ENCODE measurements at regions of chr16 and their contacts with region 1.

Region 1: DNA sequence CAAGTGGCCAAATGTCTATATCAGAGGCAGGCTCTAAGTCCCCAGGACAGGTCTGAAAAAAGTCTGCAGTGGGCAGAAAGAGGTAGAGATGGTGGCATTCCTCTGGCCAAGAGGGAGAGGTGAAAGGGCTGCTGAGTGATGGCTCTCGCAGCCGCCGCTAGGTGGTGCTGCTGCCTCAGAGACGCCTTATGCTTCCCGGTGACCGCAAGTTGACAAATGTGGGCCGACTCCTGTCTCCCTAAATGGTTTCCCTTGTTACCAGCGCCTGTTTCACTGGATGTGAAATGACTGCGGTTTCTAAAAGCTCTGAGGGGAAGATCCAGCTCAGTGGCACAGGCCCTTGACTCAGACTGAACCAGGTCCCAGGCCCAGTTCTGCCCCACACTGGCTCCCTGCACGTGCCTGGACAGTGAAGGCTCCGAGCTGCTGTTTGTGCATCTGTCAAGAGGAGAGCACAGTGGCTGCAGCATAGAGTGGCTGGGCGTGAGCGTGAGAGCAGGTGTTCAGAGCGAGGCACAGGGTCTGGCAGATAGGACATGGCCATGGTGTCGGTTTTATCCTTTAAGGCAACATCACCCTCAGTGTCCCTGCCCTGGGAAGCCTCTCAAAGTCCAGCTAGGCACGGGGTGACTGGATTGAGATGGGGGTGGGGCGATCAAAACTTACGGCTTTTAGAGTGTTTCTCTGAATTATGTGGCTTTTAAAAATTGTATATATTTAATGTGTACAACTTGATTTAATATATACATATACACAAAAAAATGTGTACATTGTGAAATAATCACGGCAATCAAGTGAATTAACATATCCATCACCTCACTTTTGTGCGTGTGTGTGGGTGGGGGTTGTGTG is 19.9 kb downstream of the CLEC16A start:
- DNase-seq: peak; percentile 71 to 82 (median 77)
- H3K4me3 ChIP-seq: peak overlapping the region in 1 of 2 donors; percentile 39
- H3K4me3 Mint-ChIP-seq: peak overlapping the region in 7 of 8 donors; percentile 68 to 83 (median 75)
- H3K27ac ChIP-seq: peak overlapping the region; percentile 63
- H3K27ac Mint-ChIP-seq: peak overlapping the region; percentile 88 to 95 (median 92)
- H3K4me1 ChIP-seq: peaks cover 20% of the 10 kb centered on the region
- H3K4me1 Mint-ChIP-seq: peaks cover 21 to 39% (median 26%) of the 10 kb centered on the region in 4 donors
- H3K27me3 ChIP-seq: no peaks in the 10 kb centered on the region
- H3K27me3 Mint-ChIP-seq: no peaks in the 10 kb centered on the region

Region 2: DNA sequence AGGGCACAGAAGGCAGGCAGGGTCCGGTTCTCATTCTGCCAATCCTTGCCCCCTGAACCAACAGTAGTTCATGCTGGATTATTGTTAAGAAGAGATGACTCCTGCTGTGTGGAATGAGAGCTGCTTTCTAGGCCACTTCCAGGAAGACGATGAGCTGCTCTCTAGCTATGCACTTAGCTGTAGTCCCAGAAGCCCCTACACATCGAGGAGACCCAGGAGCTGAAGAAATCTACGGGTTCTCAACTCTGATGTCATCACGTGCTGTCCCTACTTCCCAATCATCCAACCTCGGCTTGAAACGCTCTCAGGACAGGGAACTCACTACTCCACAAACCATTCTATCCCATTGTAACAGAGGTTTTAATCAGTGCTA is 354.9 kb before region 1 on chr16:
- CTCF ChIA-PET with region 1: no interaction called
- POLR2A ChIA-PET with region 1: no interaction called
- intact Hi-C with region 1: no loop called
- DNase-seq: no peak
- H3K4me3 ChIP-seq: no peak overlapping the region
- H3K4me3 Mint-ChIP-seq: no peak overlapping the region
- H3K27ac ChIP-seq: no peak overlapping the region
- H3K27ac Mint-ChIP-seq: no peak overlapping the region
- H3K4me1 ChIP-seq: no peaks in the 10 kb centered on the region
- H3K4me1 Mint-ChIP-seq: no peaks in the 10 kb centered on the region
- H3K27me3 ChIP-seq: no peaks in the 10 kb centered on the region
- H3K27me3 Mint-ChIP-seq: peaks cover 4 to 9% of the 10 kb centered on the region in 2 donors

Region 3: GRCh38 chr16:10981697-10982216 is 17.5 kb after region 1 on chr16:
- CTCF ChIA-PET with region 1: interaction called, 15 read pairs
- POLR2A ChIA-PET with region 1: no interaction called
- intact Hi-C with region 1: no loop called
- DNase-seq: no peak
- H3K4me3 ChIP-seq: no peak overlapping the region
- H3K4me3 Mint-ChIP-seq: no peak overlapping the region
- H3K27ac ChIP-seq: no peak overlapping the region
- H3K27ac Mint-ChIP-seq: peak overlapping the region in 1 of 7 donors; percentile 74
- H3K4me1 ChIP-seq: peaks cover 15% of the 10 kb centered on the region
- H3K4me1 Mint-ChIP-seq: peaks cover 20 to 29% (median 27%) of the 10 kb centered on the region in 4 donors
- H3K27me3 ChIP-seq: no peaks in the 10 kb centered on the region
- H3K27me3 Mint-ChIP-seq: no peaks in the 10 kb centered on the region

Region 4: DNA sequence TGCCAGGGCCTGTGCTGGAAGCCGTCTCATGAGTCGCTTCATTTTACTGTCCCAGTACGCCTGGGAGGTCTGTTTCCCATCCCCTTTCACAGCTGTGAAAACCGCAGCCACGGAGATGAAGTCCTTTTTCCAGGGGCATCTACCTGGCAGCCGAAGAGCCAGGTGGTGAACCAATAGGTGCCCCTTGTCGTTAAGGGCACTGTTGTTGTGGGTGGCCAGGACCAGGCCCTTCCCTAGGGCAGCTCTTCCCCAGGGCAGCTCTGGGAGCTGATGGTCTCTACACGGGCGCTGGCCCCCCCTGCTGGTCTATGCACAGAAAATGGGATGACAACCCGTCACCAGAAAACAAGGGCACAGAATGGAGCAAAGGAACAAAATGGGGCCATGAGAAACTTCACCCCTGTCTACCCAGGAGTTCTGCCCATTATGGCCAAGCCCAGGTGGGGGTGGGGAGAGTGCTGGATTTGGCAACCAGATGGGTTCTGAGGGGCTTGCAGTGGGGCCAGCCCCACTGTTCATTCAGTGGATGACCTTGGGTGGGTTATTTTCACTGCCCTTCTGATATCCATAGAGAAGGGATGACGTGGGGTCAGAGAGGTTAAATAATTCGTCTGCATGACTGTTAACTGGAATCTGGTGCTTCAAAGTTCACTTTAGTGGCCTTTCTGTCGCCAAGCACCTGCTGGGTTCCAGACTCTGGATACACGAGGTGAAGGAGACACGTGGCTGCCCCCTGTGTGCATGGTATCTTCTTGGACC is 392.5 kb after region 1 on chr16:
- CTCF ChIA-PET with region 1: interaction called, 70 read pairs
- POLR2A ChIA-PET with region 1: interaction called, 12 read pairs
- intact Hi-C with region 1: loop called (anchors 1 kb)
- DNase-seq: peak in 4 of 5 donors; percentile 40 to 48 (median 44)
- H3K4me3 ChIP-seq: no peak overlapping the region
- H3K4me3 Mint-ChIP-seq: no peak overlapping the region
- H3K27ac ChIP-seq: no peak overlapping the region
- H3K27ac Mint-ChIP-seq: peak overlapping the region in 4 of 7 donors; percentile 11 to 56 (median 38)
- H3K4me1 ChIP-seq: peaks cover 47% of the 10 kb centered on the region
- H3K4me1 Mint-ChIP-seq: peaks cover 37 to 74% (median 50%) of the 10 kb centered on the region in 4 donors
- H3K27me3 ChIP-seq: no peaks in the 10 kb centered on the region
- H3K27me3 Mint-ChIP-seq: peaks cover 4 to 16% of the 10 kb centered on the region in 2 donors

Region 5: DNA sequence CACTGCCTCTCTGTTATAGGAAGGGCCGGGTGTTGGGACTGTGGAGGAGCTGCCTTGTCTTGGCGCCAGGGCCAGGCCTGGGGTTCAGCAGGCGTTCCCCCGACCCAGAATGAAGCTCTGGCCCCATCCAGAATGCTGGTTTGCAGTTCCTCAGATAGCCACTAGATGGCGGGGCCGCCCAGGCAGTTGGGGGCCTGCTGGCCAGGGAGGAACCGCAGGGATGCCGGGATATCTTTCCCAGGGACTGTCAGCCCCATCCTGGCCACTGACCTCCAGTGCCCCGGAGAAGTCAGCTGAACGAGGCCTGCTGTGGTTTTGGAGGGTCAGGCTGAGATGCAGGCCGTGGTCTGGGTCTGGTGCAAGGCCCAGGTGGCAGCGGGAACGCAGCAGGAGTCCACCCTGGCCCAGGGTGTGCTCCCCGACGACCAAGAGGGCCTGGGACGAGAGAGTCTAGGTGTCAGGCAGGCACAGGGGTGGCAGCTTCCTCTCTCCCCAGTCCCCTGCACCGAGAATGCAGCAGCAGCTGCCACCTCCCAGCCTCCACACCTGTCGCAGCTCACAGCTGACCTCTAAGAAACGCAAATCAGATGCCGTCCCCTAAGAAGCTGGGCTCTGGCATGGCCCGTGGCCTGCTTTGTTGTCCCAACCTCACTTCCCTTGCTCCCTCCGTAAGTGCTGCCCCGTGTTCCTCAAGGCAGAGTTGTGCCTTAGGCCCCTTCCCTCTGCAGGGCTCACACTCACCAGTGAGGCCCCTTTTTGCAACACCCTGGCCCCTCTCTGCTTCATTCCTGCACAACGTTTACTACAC is 432.2 kb after region 1 on chr16:
- CTCF ChIA-PET with region 1: interaction called, 11 read pairs
- POLR2A ChIA-PET with region 1: no interaction called
- intact Hi-C with region 1: no loop called
- DNase-seq: peak; percentile 51 to 65 (median 54)
- H3K4me3 ChIP-seq: no peak overlapping the region
- H3K4me3 Mint-ChIP-seq: no peak overlapping the region
- H3K27ac ChIP-seq: no peak overlapping the region
- H3K27ac Mint-ChIP-seq: peak overlapping the region in 1 of 7 donors; percentile 24
- H3K4me1 ChIP-seq: peaks cover 5% of the 10 kb centered on the region
- H3K4me1 Mint-ChIP-seq: peaks cover 0 to 5% (median 1%) of the 10 kb centered on the region in 4 donors
- H3K27me3 ChIP-seq: no peaks in the 10 kb centered on the region
- H3K27me3 Mint-ChIP-seq: no peaks in the 10 kb centered on the region

Region 6: DNA sequence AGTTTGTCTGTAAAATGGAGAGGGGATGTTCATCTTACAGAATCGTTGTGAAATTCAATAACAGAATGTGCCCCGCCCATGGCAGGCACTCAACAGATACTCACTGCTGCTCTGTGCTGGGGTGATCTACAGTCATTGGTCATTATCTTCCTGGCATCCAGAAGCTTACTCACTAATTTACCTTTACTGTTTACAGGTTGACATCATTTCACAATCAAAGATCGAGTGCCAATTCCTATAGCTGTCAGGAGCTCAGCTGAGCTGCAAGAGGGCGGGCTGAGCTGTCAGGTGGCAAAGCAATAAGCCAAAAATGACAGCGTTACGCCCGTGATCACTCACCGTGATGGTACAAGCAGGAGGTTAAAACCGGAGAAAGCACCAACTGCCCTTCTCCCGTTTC is 571.2 kb after region 1 on chr16:
- CTCF ChIA-PET with region 1: interaction called, 5 read pairs
- POLR2A ChIA-PET with region 1: no interaction called
- intact Hi-C with region 1: loop called (anchors 5 kb)
- DNase-seq: no peak
- H3K4me3 ChIP-seq: no peak overlapping the region
- H3K4me3 Mint-ChIP-seq: no peak overlapping the region
- H3K27ac ChIP-seq: no peak overlapping the region
- H3K27ac Mint-ChIP-seq: no peak overlapping the region
- H3K4me1 ChIP-seq: no peaks in the 10 kb centered on the region
- H3K4me1 Mint-ChIP-seq: peaks cover 5 to 11% (median 10%) of the 10 kb centered on the region in 4 donors
- H3K27me3 ChIP-seq: no peaks in the 10 kb centered on the region
- H3K27me3 Mint-ChIP-seq: no peaks in the 10 kb centered on the region

Region 7: GRCh38 chr16:11715246-11715947 is 751.1 kb after region 1 on chr16:
- CTCF ChIA-PET with region 1: interaction called, 16 read pairs
- POLR2A ChIA-PET with region 1: no interaction called
- intact Hi-C with region 1: loop called (anchors 1 kb)
- DNase-seq: no peak
- H3K4me3 ChIP-seq: no peak overlapping the region
- H3K4me3 Mint-ChIP-seq: no peak overlapping the region
- H3K27ac ChIP-seq: no peak overlapping the region
- H3K27ac Mint-ChIP-seq: peak overlapping the region in 1 of 7 donors; percentile 71
- H3K4me1 ChIP-seq: peaks cover 3% of the 10 kb centered on the region
- H3K4me1 Mint-ChIP-seq: peaks cover 12 to 32% (median 21%) of the 10 kb centered on the region in 4 donors
- H3K27me3 ChIP-seq: no peaks in the 10 kb centered on the region
- H3K27me3 Mint-ChIP-seq: no peaks in the 10 kb centered on the region